ENCODE measurements at regions of chr17 and their contacts with region 1.

Region 1: DNA sequence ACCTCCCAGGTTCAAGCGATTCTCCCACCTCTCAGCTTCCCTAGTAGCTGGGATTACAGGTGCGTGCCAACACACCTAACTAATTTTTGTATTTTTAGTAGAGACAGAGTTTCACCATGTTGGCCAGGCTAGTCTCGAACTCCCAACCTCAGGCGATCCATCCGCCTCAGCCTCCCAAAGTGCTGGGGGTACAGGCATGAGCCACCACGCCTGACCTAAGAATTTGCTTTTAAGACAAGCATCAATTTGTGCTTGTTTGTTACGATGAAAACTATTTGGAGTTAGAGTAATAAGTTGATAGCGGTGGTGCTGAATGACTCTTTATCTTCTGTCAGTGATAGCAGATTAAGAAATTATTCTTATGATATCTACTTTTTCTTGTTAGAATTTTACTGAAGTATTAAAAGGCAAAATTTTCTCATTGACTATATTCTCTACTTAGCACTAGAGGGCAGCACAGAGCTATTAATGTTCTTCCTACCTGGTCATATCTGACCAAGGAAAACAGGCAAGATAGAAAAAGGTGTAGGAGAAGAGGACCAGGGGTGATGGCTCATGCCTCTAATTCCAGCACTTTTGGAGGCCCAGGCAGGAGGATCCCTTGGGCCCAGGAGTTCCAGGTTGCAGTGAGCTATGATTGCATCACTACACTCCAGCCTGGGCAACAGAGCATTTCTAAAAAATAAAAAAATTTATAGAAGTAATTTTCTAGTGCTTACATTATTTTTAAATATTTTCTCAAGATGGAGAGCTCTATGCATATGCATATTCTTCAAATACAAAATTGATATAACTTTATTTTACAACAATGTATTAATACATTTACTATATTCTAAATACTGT is 24.5 kb downstream of the STXBP4 start:
- DNase-seq: peak in 1 of 10 donors; percentile 11
- H3K4me3 ChIP-seq: no peak overlapping the region
- H3K27ac ChIP-seq: no peak overlapping the region
- H3K27me3 ChIP-seq: no peaks in the 10 kb centered on the region
- CTCF ChIP-seq: peak; percentile 48 to 87 (median 72)

Region 2: GRCh38 chr17:54760836-54761235 is 232.2 kb before region 1 on chr17:
- intact Hi-C with region 1: no loop called
- DNase-seq: no peak
- H3K4me3 ChIP-seq: no peak overlapping the region
- H3K27ac ChIP-seq: no peak overlapping the region
- H3K27me3 ChIP-seq: peaks cover 0 to 5% (median 0%) of the 10 kb centered on the region in 45 donors
- CTCF ChIP-seq: no peak

Region 3: GRCh38 chr17:55238179-55238930 is 245.3 kb after region 1 on chr17:
- intact Hi-C with region 1: loop called in 1 of 2 experiments (anchors 5 kb)
- DNase-seq: peak; percentile 91 to 96 (median 94)
- H3K4me3 ChIP-seq: peak overlapping the region; percentile 39 to 79 (median 66)
- H3K27ac ChIP-seq: peak overlapping the region in 58 of 59 donors; percentile 53 to 98 (median 90)
- H3K27me3 ChIP-seq: no peaks in the 10 kb centered on the region
- CTCF ChIP-seq: peak in 40 of 56 donors; percentile 5 to 63 (median 29)

Region 4: GRCh38 chr17:55348749-55349354 is 355.8 kb after region 1 on chr17:
- intact Hi-C with region 1: loop called (anchors 2 to 10 kb)
- DNase-seq: peak in 8 of 10 donors; percentile 22 to 63 (median 43)
- H3K4me3 ChIP-seq: peak overlapping the region in 3 of 59 donors; percentile 6 to 28 (median 15)
- H3K27ac ChIP-seq: peak overlapping the region in 31 of 59 donors; percentile 11 to 87 (median 60)
- H3K27me3 ChIP-seq: no peaks in the 10 kb centered on the region
- CTCF ChIP-seq: peak; percentile 70 to 94 (median 86)

Region 5: DNA sequence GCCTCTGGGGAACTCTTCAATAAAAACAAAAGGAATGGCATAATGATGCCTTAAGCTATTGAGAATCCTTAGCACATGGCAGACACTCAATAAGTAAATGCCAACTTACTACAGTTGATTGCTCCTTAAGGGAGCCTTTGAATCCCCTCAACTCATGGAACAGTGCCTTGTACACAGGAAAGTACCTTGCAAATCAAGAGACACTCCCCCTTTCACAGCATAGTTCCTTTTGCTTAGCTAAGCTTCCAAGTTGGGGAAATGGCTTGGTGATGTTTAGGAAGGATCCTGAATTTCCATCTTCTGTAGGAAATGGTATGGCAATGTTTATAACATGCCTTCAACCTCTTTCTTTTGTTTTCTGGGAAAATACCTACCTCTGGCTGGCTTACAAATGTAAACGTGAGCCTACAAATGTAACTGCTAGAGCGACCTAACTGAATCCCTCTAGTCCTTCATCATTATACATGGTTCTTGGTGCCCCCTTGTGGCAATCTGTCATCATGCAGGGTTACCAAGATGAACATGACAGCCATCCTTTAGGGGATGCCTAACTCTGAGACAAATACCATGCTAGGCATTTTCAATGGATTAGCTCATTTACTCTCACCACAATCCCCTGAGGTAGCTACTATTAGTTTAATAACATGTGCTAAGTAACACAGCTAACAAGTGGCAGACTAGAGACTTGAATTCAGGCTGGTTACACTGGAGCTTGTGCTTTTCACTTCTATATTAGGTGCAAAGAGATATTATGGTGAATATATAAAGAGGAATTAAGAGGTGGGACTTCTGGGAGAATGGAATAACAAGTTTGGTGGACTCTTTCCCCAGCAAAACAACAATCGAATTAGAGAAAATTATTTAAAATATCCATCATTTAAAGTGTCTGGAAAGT is 363.7 kb after region 1 on chr17:
- intact Hi-C with region 1: loop called in 1 of 2 experiments (anchors 10 kb)
- DNase-seq: peak in 9 of 10 donors; percentile 28 to 90 (median 60)
- H3K4me3 ChIP-seq: no peak overlapping the region
- H3K27ac ChIP-seq: no peak overlapping the region
- H3K27me3 ChIP-seq: no peaks in the 10 kb centered on the region
- CTCF ChIP-seq: peak; percentile 58 to 92 (median 84)

Region 6: GRCh38 chr17:55513885-55514591 is 521.0 kb after region 1 on chr17:
- intact Hi-C with region 1: loop called in 1 of 2 experiments (anchors 5 kb)
- DNase-seq: peak in 7 of 10 donors; percentile 43 to 89 (median 49)
- H3K4me3 ChIP-seq: peak overlapping the region in 13 of 59 donors; percentile 3 to 39 (median 22)
- H3K27ac ChIP-seq: no peak overlapping the region
- H3K27me3 ChIP-seq: peaks cover 0 to 2% (median 0%) of the 10 kb centered on the region in 45 donors
- CTCF ChIP-seq: peak; percentile 78 to 98 (median 92)

Measured in dorsolateral prefrontal cortex (tissue), 120 donors.